ENCODE measurements at regions of chr11 and their contacts with region 1.

Region 1: DNA sequence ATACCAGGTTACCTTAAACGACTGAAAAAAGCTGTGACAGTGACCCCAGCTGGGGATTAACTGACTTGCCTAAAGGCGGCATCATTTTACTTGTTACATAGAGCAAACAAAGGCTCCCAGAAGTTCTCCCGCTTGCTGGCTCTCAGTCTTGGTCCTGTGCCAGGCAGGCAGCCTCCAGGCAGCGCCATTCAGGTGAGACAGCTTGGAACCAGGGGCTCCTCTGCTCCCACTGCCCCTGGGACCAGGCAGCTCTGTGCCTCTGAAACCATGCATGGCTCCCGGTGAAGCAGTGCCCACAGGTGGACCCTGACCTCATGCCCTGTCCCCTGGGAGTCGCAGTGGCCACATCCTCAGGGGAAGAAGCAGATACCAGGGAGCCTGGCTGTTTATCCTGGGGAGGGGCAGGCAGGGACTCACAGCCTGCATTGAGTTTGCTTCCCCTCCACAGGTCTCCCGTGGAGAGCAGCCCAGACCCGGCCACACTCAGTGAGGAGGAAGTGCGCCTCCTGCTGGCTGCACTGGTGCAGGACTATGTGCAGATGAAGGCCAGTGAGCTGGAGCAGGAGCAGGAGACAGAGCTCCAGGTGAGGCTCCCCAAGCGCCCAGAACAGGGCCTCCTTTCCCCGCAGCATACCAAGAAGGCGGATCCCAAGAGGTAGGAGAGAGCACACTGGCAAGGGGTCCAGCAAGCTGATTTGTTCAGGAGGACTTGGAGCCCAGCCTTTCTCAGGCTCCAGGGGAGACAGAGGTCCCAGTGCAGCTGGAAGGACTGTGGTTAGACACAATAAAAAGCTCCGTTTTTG is 15.6 kb upstream of the CYP2R1 start:
- DNase-seq: peak; percentile 83 to 90
- H3K4me3 ChIP-seq: no peak overlapping the region
- H3K27ac ChIP-seq: no peak overlapping the region
- H3K4me1 ChIP-seq: peaks cover 10 to 31% (median 25%) of the 10 kb centered on the region in 4 donors
- H3K27me3 ChIP-seq: no peaks in the 10 kb centered on the region
- CTCF ChIP-seq: peak in 5 of 7 experiments; percentile 61 to 79 (median 75)
- EP300 ChIP-seq: no peak
- POLR2A ChIP-seq: no peak

Region 2: GRCh38 chr11:14544611-14545010 is 363.0 kb before region 1 on chr11:
- intact Hi-C with region 1: loop called (anchors 10 kb)
- DNase-seq: no peak
- H3K4me3 ChIP-seq: no peak overlapping the region
- H3K27ac ChIP-seq: no peak overlapping the region
- H3K4me1 ChIP-seq: peaks cover 0 to 26% (median 6%) of the 10 kb centered on the region in 4 donors
- H3K27me3 ChIP-seq: no peaks in the 10 kb centered on the region
- CTCF ChIP-seq: no peak
- EP300 ChIP-seq: no peak
- POLR2A ChIP-seq: no peak

Region 3: DNA sequence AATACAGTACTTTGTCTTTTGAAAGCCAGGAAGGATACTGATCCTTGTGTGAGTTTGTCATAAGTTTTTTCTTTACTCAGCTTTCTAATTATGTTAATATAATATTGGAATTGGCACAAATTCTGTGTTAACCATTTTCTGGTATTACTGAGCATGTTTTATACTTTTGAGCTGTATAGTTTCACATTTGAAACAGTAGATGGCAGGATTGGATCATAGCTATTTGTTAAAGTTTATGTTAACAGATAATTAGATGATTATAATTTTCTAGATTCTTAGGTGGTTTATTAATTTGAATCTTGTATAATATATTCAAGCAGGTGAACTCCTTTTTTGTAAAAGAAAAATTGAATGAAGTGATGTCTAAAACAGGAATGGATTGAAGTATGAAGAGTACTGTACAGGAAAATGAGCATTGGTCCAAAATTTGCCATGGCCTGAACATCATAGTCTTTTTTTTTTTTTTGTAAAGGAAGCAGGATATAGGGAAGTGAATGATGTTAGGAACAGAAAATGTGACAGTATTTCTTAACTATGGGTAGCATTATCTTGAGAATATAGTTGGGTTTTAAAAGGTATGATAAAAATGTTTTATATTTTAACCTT is 117.6 kb before region 1 on chr11:
- intact Hi-C with region 1: loop called (anchors 10 kb)
- DNase-seq: peak in 1 of 2 donors; percentile 30
- H3K4me3 ChIP-seq: no peak overlapping the region
- H3K27ac ChIP-seq: no peak overlapping the region
- H3K4me1 ChIP-seq: no peaks in the 10 kb centered on the region
- H3K27me3 ChIP-seq: no peaks in the 10 kb centered on the region
- CTCF ChIP-seq: peak in 5 of 7 experiments; percentile 5 to 44 (median 41)
- EP300 ChIP-seq: no peak
- POLR2A ChIP-seq: no peak

Measured in stomach (tissue), 19 donors.